ENCODE measurements at regions of chr3 and their contacts with region 1.

Region 1: DNA sequence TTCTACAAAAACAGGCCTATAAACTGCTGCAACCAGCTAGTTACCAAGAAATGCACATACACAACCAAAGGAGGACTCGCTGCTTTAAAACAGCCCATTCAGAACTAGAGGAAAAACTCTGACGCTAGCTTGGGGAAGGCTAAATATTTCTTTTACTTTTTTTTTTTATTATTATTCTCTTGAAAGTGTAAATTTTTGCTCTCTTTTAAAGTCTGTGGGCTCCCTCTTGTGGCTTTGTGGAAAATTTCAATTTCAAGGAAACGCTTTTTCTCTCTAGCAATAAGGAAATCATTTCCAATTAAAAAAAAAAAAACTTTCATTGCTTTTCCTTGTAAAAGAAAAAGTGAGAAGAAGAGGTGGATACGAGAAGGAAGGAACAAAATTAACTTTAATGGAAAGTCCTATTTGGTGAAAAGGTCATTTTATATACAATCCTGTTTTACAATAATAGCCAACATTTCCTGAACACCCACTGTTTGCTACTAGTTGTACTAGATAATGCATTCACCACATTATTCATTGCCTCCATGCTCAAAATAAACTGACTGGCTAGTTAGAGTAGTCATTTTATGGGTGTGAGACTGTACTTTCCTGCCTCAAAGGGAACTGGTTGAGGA is 51.2 kb upstream of the SAMMSON start:
- DNase-seq: peak; percentile 30
- H3K4me3 ChIP-seq: no peak overlapping the region
- H3K27ac ChIP-seq: no peak overlapping the region
- H3K27me3 ChIP-seq: no peaks in the 10 kb centered on the region
- CTCF ChIP-seq: peak; percentile 57

Region 2: GRCh38 chr3:69675786-69676530 is 272.4 kb before region 1 on chr3:
- in situ Hi-C with region 1: loop called (anchors 25 kb)
- DNase-seq: no peak
- H3K4me3 ChIP-seq: no peak overlapping the region
- H3K27ac ChIP-seq: no peak overlapping the region
- H3K27me3 ChIP-seq: peaks cover under 1% of the 10 kb centered on the region
- CTCF ChIP-seq: no peak

Measured in brain microvascular endothelial cell (primary cell).